ENCODE measurements at regions of chr1 and their contacts with region 1.

Region 1: DNA sequence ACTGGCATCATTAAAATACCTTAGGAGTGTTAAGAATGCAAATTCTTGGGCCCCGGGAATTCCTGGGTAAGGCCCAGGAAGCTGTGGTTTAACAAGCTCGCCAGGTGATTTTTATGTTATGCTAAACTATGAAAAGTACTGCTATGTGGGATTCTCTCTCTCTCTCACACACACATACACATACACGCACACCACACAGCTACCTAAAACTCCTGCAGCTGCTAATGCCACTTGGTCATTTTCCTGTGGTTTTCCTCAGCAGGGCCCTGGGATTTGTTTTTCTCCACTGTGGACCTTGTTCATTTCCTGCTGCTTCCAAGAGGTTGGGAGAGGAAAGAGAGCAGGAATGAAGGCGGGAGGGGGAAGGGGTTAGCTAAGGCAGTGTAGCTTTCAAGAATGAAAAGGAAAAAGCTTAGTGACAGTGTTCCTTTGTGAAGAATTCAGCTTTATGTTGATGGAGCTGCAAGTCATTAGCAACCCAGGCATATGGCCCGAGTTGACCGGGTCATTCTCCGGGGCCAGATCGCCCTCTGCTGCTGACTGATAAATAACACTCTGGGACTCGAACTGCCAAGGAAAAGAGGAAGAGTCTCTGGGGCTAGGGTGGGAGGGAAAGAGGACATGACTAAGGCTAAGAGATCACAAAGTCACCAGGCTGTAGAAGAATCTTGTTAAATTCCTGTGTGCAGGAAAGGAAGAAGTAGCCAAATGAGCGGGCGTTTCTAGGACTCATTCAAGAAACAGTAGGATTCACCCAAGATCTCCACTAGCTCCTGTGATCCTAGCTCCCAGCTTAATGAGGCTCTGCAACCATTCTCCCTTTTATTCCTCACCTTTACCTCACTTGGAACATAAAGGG is 30.5 kb upstream of the LRIG2 start:
- DNase-seq: no peak
- H3K4me3 ChIP-seq: no peak overlapping the region
- H3K4me3 Mint-ChIP-seq: peak overlapping the region in 3 of 8 donors; percentile 12 to 32 (median 27)
- H3K27ac ChIP-seq: no peak overlapping the region
- H3K27ac Mint-ChIP-seq: peak overlapping the region in 5 of 7 donors; percentile 43 to 85 (median 78)
- H3K4me1 ChIP-seq: peaks cover 23% of the 10 kb centered on the region
- H3K4me1 Mint-ChIP-seq: peaks cover 20 to 41% (median 29%) of the 10 kb centered on the region in 4 donors
- H3K27me3 ChIP-seq: no peaks in the 10 kb centered on the region
- H3K27me3 Mint-ChIP-seq: no peaks in the 10 kb centered on the region

Region 2: DNA sequence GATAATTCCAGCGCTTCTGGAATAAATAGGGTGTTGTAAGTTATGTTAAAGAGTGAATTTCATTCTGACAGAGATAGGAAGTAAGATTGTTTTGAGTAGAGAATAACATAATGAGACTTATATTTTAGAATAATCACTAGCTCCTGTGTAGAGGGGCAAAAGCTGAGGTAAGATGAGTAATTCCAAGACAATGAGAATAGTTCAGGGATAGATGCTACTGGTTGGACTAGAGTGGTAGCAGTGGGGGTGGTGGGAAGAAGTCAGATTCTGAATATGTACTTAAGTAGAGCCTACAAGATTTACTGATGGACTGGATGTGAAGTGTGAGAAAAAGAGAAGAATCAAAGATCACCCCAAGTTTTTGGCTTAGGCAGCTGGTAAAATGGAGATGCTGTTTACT is 391.3 kb before region 1 on chr1:
- CTCF ChIA-PET with region 1: no interaction called
- POLR2A ChIA-PET with region 1: no interaction called
- intact Hi-C with region 1: no loop called
- DNase-seq: no peak
- H3K4me3 ChIP-seq: no peak overlapping the region
- H3K4me3 Mint-ChIP-seq: no peak overlapping the region
- H3K27ac ChIP-seq: no peak overlapping the region
- H3K27ac Mint-ChIP-seq: peak overlapping the region; percentile 6 to 93 (median 32)
- H3K4me1 ChIP-seq: peaks cover 11% of the 10 kb centered on the region
- H3K4me1 Mint-ChIP-seq: peaks cover 15 to 30% (median 22%) of the 10 kb centered on the region in 4 donors
- H3K27me3 ChIP-seq: no peaks in the 10 kb centered on the region
- H3K27me3 Mint-ChIP-seq: no peaks in the 10 kb centered on the region

Region 3: DNA sequence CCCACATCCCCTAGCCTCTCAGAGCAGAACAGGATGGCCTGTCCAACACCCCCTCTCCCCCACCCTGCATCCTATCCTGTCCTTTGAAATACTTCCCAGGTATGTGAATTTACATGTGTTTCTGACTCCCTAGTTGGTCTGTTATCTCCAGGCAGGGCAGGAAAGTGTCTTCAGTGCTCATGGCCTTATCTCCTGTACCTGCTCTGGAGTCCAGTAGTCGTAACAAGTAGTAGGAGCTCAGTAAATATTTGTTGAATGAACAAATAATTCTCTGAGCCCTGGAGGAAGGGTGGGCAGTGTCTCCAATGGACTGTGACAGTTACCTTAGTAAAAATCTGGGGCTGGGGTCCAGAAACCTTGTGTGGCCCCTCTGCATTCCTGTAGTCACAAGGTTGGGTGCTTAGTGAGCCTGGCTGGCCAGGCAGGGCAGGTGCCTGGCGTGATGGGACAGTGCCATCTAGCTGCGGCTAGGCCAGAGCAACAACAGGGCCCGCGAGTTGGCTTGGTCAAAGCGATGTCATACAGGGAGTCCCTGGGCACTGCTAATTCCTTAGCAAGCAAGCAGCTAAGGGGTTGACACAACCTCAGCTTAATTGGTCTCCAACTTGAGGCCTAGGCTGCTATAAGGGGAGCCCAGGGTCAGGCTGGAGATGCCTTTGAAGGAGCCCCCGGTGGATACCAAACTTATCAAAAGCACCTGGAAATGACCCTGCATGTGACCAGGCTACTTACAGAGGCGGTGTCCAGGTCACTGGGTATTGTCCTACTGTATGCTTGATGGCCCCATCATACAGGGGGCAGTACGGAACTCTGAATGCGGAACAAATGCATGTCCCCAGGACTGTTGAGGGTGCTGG is 238.4 kb before region 1 on chr1:
- CTCF ChIA-PET with region 1: no interaction called
- POLR2A ChIA-PET with region 1: no interaction called
- intact Hi-C with region 1: loop called (anchors 10 kb)
- DNase-seq: peak in 4 of 5 donors; percentile 15 to 25 (median 22)
- H3K4me3 ChIP-seq: no peak overlapping the region
- H3K4me3 Mint-ChIP-seq: no peak overlapping the region
- H3K27ac ChIP-seq: no peak overlapping the region
- H3K27ac Mint-ChIP-seq: no peak overlapping the region
- H3K4me1 ChIP-seq: no peaks in the 10 kb centered on the region
- H3K4me1 Mint-ChIP-seq: no peaks in the 10 kb centered on the region
- H3K27me3 ChIP-seq: no peaks in the 10 kb centered on the region
- H3K27me3 Mint-ChIP-seq: peaks cover 0 to 3% of the 10 kb centered on the region in 2 donors

Region 4: GRCh38 chr1:113007706-113008364 is 34.7 kb before region 1 on chr1:
- CTCF ChIA-PET with region 1: no interaction called
- POLR2A ChIA-PET with region 1: no interaction called
- intact Hi-C with region 1: no loop called
- DNase-seq: no peak
- H3K4me3 ChIP-seq: no peak overlapping the region
- H3K4me3 Mint-ChIP-seq: no peak overlapping the region
- H3K27ac ChIP-seq: no peak overlapping the region
- H3K27ac Mint-ChIP-seq: no peak overlapping the region
- H3K4me1 ChIP-seq: no peaks in the 10 kb centered on the region
- H3K4me1 Mint-ChIP-seq: no peaks in the 10 kb centered on the region
- H3K27me3 ChIP-seq: no peaks in the 10 kb centered on the region
- H3K27me3 Mint-ChIP-seq: no peaks in the 10 kb centered on the region

Region 5: DNA sequence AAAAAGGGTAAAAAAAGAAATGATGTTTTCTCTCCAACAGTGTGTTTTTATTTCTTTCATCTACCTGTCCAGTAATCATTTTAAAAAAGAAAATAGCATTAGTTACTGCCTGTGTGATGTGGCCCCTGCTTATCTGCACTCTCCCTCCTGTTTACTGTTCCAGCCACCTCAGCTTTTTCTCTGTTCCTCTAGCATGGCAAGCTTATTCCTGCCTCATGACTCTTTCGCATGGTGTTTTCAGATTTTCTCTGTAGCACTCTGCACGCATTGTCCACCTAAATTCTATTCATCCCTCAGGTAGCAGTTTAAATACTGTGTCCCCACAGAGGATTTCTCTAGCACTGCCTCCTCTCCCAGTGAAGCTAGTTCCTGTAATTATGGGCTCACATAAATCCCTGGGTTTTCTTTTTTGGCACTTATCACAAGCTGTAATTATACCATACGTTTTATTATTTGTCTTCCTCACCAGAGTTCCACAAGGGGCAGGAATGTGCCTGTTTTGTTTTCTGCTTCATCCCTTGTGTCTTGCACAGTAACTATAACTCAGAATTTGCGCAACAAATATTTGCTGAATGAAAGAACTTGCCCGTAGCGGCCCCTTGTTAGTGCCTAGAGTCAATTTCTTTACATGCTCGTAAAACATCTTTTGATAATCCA is 21.0 kb before region 1 on chr1:
- CTCF ChIA-PET with region 1: no interaction called
- POLR2A ChIA-PET with region 1: no interaction called
- intact Hi-C with region 1: no loop called
- DNase-seq: no peak
- H3K4me3 ChIP-seq: no peak overlapping the region
- H3K4me3 Mint-ChIP-seq: no peak overlapping the region
- H3K27ac ChIP-seq: no peak overlapping the region
- H3K27ac Mint-ChIP-seq: peak overlapping the region in 1 of 7 donors; percentile 7
- H3K4me1 ChIP-seq: no peaks in the 10 kb centered on the region
- H3K4me1 Mint-ChIP-seq: peaks cover 0 to 3% (median 1%) of the 10 kb centered on the region in 4 donors
- H3K27me3 ChIP-seq: no peaks in the 10 kb centered on the region
- H3K27me3 Mint-ChIP-seq: no peaks in the 10 kb centered on the region

Measured in CD4-positive, alpha-beta memory T cell (primary cell).